GM12878 (cell line): ENCODE measurements at regions of chr7 and their contacts with region 1.

Region 1: DNA sequence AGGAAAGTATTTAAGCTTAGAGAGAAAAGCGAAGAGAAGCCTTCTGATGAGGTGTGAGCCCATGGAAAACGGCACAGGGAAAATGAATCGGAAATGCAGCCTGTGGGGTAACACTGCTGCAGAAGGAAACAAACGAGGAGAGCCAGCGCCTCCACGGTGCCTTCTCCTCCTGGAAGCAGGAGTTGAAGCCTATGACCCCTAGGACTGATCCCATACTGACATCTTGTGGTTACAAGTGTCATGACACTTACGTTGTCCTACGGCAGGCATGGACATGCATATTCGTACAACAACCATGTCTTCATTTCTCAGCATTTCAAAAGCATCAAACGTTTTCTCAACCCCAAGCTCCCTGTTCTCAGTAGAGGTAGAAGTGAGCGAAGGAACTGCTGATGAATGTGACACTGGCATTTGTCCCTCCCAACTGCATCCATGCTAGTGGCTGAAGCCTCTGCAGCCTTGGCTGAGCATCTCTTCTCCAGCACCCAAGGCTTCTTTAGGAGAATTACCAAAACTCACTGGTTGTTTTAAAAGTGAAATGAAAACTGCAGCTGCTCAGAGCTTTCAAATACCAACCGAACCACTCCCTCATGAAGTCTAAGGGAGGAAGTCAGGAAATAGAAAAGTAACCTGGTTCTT is 160.2 kb downstream of the JAZF1 start:
- DNase-seq: peak; percentile 43
- ATAC-seq: peak; percentile 93
- H3K4me3 ChIP-seq: no peak overlapping the region
- H3K27ac ChIP-seq: no peak overlapping the region
- H3K4me1 ChIP-seq: no peaks in the 10 kb centered on the region
- H3K27me3 ChIP-seq: peaks cover 0 to 1% of the 10 kb centered on the region in 2 experiments; a peak in 1 of 4 replicates
- CTCF ChIP-seq: peak; percentile 82 to 93 (median 83)
- EP300 ChIP-seq: no peak
- POLR2A ChIP-seq: no peak
- RAD21 ChIP-seq: peak; percentile 89

Region 2: GRCh38 chr7:27689591-27690164 is 330.7 kb before region 1 on chr7:
- CTCF ChIA-PET with region 1: no interaction called
- POLR2A ChIA-PET with region 1: no interaction called
- RAD21 ChIA-PET with region 1: no interaction called
- SMC1A ChIA-PET with region 1: no interaction called
- in situ Hi-C with region 1: no loop called
- intact Hi-C with region 1: loop called (anchors 5 kb)
- DNase-seq: no peak
- ATAC-seq: peak; percentile 83
- H3K4me3 ChIP-seq: no peak overlapping the region
- H3K27ac ChIP-seq: no peak overlapping the region
- H3K4me1 ChIP-seq: no peaks in the 10 kb centered on the region
- H3K27me3 ChIP-seq: no peaks in the 10 kb centered on the region
- CTCF ChIP-seq: peak; percentile 42 to 69 (median 43); a peak in 5 of 6 replicates
- EP300 ChIP-seq: no peak
- POLR2A ChIP-seq: no peak
- RAD21 ChIP-seq: peak; percentile 53

Region 3: DNA sequence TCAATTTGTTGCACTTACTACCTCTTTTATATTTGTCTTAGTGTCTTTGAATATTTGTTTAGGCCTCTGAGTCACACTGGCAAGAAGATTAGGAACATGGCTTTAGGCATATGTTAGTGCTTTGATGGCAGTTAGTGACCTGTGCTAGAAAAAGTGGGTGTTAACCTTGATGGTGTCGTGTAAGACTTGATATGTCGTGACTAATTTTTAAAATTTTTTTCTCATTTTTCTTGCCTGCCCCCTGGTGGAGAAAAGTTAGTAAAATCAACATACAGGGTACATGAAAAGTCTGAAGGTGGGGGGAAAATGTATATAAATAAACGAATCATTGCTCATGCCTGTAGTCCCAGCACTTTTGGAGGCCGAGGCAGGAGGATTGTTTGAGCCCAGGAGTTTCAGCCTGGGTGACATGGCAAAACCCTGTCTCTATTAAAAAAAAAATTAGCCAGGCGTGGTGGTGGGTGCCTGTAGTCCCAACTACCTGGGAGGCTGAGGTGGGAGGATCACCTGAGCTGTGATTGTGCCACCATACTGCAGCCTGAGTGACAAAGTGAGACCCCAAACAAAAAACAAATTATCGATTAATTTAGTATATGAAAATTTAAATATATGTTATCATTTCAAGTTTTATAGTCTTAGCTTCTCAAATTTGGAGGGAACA is 235.9 kb before region 1 on chr7:
- CTCF ChIA-PET with region 1: no interaction called
- POLR2A ChIA-PET with region 1: no interaction called
- RAD21 ChIA-PET with region 1: no interaction called
- SMC1A ChIA-PET with region 1: no interaction called
- in situ Hi-C with region 1: no loop called
- intact Hi-C with region 1: loop called (anchors 5 kb)
- DNase-seq: no peak
- ATAC-seq: peak; percentile 60
- H3K4me3 ChIP-seq: no peak overlapping the region
- H3K27ac ChIP-seq: no peak overlapping the region
- H3K4me1 ChIP-seq: no peaks in the 10 kb centered on the region
- H3K27me3 ChIP-seq: no peaks in the 10 kb centered on the region
- CTCF ChIP-seq: peak; percentile 33 to 45 (median 39); a peak in 5 of 6 replicates
- EP300 ChIP-seq: no peak
- POLR2A ChIP-seq: no peak
- RAD21 ChIP-seq: 0 out of 2 replicates have a peak, but pooled peaks have one; percentile 15

Region 4: GRCh38 chr7:28132959-28133870 is 112.8 kb after region 1 on chr7:
- CTCF ChIA-PET with region 1: no interaction called
- POLR2A ChIA-PET with region 1: no interaction called
- RAD21 ChIA-PET with region 1: no interaction called
- SMC1A ChIA-PET with region 1: no interaction called
- in situ Hi-C with region 1: no loop called
- intact Hi-C with region 1: no loop called
- DNase-seq: no peak
- ATAC-seq: no peak
- H3K4me3 ChIP-seq: no peak overlapping the region
- H3K27ac ChIP-seq: no peak overlapping the region
- H3K4me1 ChIP-seq: no peaks in the 10 kb centered on the region
- H3K27me3 ChIP-seq: peaks cover 0 to 1% of the 10 kb centered on the region in 2 experiments; a peak in 2 of 4 replicates
- CTCF ChIP-seq: no peak
- EP300 ChIP-seq: no peak
- POLR2A ChIP-seq: no peak
- RAD21 ChIP-seq: no peak